H1 (cell line): ENCODE measurements at regions of chr10 and their contacts with region 1.

Region 1: GRCh38 chr10:117174439-117175214 is 22.7 kb upstream of the KCNK18 start:
- DNase-seq: peak; percentile 67 to 96
- H3K4me3 ChIP-seq: peak overlapping the region; percentile 29 to 67 (median 60); a peak in 7 of 8 replicates
- H3K27ac ChIP-seq: no peak overlapping the region
- H3K4me1 ChIP-seq: peaks cover 0 to 15% (median 7%) of the 10 kb centered on the region in 4 experiments; a peak in 6 of 7 replicates
- H3K27me3 ChIP-seq: peaks cover 32 to 56% (median 49%) of the 10 kb centered on the region in 4 experiments
- CTCF ChIP-seq: peak; percentile 70 to 96 (median 96)
- EP300 ChIP-seq: no peak
- POLR2A ChIP-seq: no peak
- RAD21 ChIP-seq: peak; percentile 93 to 94

Region 2: DNA sequence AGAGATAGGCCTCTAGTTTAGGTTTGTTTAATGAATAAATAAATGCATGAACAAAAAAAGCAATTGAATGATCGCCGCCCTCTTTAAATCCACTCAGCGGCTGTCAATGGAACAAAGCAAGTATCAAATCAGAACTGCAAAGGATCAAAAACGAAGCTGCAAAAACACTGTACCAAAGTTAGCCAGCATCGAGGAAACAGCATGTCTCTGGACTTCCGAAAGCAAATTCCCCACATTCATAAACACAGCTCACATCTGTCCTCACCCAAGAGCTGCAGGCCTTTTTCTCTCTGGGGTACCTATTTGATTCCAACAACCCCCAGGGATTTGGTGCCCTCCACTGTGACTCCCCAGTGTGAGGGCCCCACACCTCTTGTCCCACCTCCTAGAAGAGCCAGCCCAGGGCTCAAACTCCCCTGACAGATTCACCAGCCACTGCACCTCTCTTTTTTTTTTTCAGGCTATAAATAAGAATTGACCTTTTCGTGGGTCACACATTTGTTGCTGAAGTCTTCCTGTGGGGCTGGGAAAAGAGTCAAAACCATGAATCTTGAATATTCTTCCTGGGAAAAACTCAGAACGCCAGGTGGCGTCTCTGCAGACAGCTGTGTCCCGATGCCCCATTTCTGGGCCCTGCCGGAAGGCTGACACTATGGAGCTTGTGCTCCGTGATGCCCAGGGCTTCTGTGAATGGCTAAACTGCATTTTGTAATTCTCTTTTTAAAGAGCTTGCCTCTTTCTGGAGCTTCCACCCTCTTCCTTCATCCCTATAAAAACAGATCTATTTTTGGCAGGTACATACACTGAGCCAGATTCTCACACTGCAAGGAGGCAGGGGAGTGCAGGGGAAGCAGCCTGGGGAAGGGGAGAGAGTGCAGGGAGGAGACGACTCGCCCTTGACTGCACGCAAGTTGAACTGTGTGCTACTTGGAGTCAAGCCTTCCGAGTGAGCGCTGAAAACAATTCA is 484.0 kb before region 1 on chr10:
- CTCF ChIA-PET with region 1: interaction called, 32 read pairs
- POLR2A ChIA-PET with region 1: no interaction called
- DNase-seq: peak in 1 of 2 experiments; percentile 57
- H3K4me3 ChIP-seq: peak overlapping the region in 3 of 4 experiments; percentile 19 to 33 (median 21); a peak in 2 of 8 replicates
- H3K27ac ChIP-seq: no peak overlapping the region
- H3K4me1 ChIP-seq: peaks cover 4 to 17% (median 8%) of the 10 kb centered on the region in 4 experiments; a peak in 6 of 7 replicates
- H3K27me3 ChIP-seq: no peaks in the 10 kb centered on the region; a peak in 3 of 7 replicates
- CTCF ChIP-seq: peak; percentile 45 to 62 (median 46)
- EP300 ChIP-seq: no peak
- POLR2A ChIP-seq: no peak
- RAD21 ChIP-seq: peak; percentile 49 to 60

Region 3: GRCh38 chr10:116836902-116837523 is 337.6 kb before region 1 on chr10:
- CTCF ChIA-PET with region 1: interaction called, 21 read pairs
- POLR2A ChIA-PET with region 1: interaction called, 6 read pairs
- DNase-seq: no peak
- H3K4me3 ChIP-seq: no peak overlapping the region
- H3K27ac ChIP-seq: no peak overlapping the region
- H3K4me1 ChIP-seq: peaks cover 29 to 50% (median 41%) of the 10 kb centered on the region in 4 experiments
- H3K27me3 ChIP-seq: no peaks in the 10 kb centered on the region
- CTCF ChIP-seq: peak in 2 of 3 experiments; percentile 12 to 22; a peak in 2 of 4 replicates
- EP300 ChIP-seq: no peak
- POLR2A ChIP-seq: no peak
- RAD21 ChIP-seq: peak; percentile 54 to 61

Region 4: DNA sequence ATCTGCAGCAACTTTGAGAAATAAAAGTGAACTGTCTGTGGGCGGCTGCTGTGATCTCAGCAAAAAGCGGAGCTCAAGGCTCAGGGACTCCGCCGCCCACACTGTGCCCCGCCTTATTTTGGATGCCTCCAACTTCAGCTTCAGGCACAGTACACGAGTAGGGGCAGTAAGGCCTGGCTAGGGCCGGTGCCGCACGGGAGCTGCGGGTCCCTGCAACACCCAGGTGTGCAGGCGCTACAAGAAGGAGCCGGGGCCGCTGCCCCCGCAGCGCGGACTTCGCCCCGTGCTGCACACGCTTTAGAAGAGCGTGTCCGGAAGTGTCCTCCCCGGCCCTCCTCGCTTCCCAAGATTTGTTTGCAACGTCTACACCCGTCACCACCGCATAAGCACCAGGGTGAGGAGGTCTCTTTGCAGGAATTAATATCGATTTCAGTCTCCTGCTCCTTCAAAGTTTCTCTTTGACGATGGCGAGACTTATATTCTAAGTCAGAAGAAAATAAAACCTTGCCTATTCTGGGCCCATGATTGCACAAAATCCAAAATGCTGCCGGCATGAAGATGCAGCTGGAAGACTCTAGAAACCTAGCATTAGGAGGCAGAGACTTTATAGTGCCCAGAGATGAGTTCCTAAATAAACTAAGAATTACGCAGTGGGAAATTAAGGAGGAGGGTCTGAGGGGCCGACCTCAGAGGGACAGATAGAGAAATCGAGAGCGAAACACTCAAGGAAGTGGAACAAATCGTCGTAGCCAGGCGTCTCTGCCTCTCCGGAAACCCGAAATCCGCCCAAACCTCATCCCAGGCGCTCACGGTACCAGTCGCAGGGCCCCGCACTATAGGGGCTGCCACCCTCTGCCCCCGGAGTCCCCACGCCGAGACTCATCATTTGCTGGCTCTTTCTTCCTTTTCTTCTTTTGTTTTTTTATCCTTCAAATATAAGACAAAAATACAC is 43.0 kb before region 1 on chr10:
- CTCF ChIA-PET with region 1: interaction called, 212 read pairs
- POLR2A ChIA-PET with region 1: no interaction called
- DNase-seq: peak in 1 of 2 experiments; percentile 62
- H3K4me3 ChIP-seq: peak overlapping the region in 3 of 4 experiments; percentile 24 to 50 (median 27); a peak in 7 of 8 replicates
- H3K27ac ChIP-seq: no peak overlapping the region
- H3K4me1 ChIP-seq: peaks cover 3 to 24% (median 12%) of the 10 kb centered on the region in 4 experiments
- H3K27me3 ChIP-seq: peaks cover 72 to 98% (median 92%) of the 10 kb centered on the region in 4 experiments
- CTCF ChIP-seq: no peak
- EP300 ChIP-seq: no peak
- POLR2A ChIP-seq: no peak
- RAD21 ChIP-seq: no peak

Region 5: GRCh38 chr10:117152668-117153067 is 22.0 kb before region 1 on chr10:
- CTCF ChIA-PET with region 1: interaction called, 31 read pairs
- POLR2A ChIA-PET with region 1: no interaction called
- DNase-seq: no peak
- H3K4me3 ChIP-seq: no peak overlapping the region
- H3K27ac ChIP-seq: no peak overlapping the region
- H3K4me1 ChIP-seq: no peaks in the 10 kb centered on the region
- H3K27me3 ChIP-seq: peaks cover 60 to 95% (median 81%) of the 10 kb centered on the region in 4 experiments
- CTCF ChIP-seq: no peak
- EP300 ChIP-seq: no peak
- POLR2A ChIP-seq: no peak
- RAD21 ChIP-seq: no peak

Region 6: GRCh38 chr10:117198088-117198487 is 23.5 kb after region 1 on chr10:
- CTCF ChIA-PET with region 1: interaction called, 28 read pairs
- POLR2A ChIA-PET with region 1: no interaction called
- DNase-seq: no peak
- H3K4me3 ChIP-seq: no peak overlapping the region
- H3K27ac ChIP-seq: no peak overlapping the region
- H3K4me1 ChIP-seq: no peaks in the 10 kb centered on the region; a peak in 2 of 7 replicates
- H3K27me3 ChIP-seq: no peaks in the 10 kb centered on the region
- CTCF ChIP-seq: no peak
- EP300 ChIP-seq: no peak
- POLR2A ChIP-seq: no peak
- RAD21 ChIP-seq: no peak